ENCODE measurements at regions of chr3 and their contacts with region 1.

Region 1: GRCh38 chr3:44529927-44530326 is 25.1 kb upstream of the ZKSCAN7 start:
- DNase-seq: peak; percentile 41
- ATAC-seq: no peak
- H3K4me3 ChIP-seq: no peak overlapping the region
- H3K27ac ChIP-seq: no peak overlapping the region
- H3K4me1 ChIP-seq: no peaks in the 10 kb centered on the region
- H3K27me3 ChIP-seq: peaks cover 6% of the 10 kb centered on the region; the same call in 1 of the 2 replicates
- CTCF ChIP-seq: peak; percentile 65

Region 2: DNA sequence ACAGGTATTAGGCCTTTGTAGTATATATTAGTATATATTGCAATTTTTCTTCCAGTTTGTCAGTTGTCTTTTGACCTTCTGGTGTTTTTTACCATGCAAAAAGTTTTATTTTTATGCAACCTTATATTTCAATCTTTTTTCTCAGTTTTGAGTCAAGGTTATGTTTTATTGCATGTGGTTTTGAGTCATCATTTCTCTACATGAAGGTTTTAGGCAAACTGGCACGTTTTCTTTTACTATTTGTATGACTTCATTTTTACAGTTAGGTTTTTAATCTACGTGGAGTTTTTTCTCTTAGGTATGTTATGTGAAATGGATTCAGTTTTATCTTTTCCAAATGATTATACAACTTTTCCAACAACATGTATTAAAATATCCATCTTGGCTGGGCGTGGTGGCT is 228.2 kb before region 1 on chr3:
- CTCF ChIA-PET with region 1: no interaction called
- POLR2A ChIA-PET with region 1: interaction called, 13 read pairs
- intact Hi-C with region 1: no loop called
- DNase-seq: peak; percentile 19
- ATAC-seq: no peak
- H3K4me3 ChIP-seq: no peak overlapping the region
- H3K27ac ChIP-seq: no peak overlapping the region
- H3K4me1 ChIP-seq: no peaks in the 10 kb centered on the region
- H3K27me3 ChIP-seq: no peaks in the 10 kb centered on the region
- CTCF ChIP-seq: no peak

Region 3: GRCh38 chr3:44612678-44613077 is 82.8 kb after region 1 on chr3:
- CTCF ChIA-PET with region 1: no interaction called
- POLR2A ChIA-PET with region 1: no interaction called
- intact Hi-C with region 1: no loop called
- DNase-seq: no peak
- ATAC-seq: no peak
- H3K4me3 ChIP-seq: no peak overlapping the region
- H3K27ac ChIP-seq: no peak overlapping the region
- H3K4me1 ChIP-seq: no peaks in the 10 kb centered on the region
- H3K27me3 ChIP-seq: no peaks in the 10 kb centered on the region
- CTCF ChIP-seq: no peak

Region 4: DNA sequence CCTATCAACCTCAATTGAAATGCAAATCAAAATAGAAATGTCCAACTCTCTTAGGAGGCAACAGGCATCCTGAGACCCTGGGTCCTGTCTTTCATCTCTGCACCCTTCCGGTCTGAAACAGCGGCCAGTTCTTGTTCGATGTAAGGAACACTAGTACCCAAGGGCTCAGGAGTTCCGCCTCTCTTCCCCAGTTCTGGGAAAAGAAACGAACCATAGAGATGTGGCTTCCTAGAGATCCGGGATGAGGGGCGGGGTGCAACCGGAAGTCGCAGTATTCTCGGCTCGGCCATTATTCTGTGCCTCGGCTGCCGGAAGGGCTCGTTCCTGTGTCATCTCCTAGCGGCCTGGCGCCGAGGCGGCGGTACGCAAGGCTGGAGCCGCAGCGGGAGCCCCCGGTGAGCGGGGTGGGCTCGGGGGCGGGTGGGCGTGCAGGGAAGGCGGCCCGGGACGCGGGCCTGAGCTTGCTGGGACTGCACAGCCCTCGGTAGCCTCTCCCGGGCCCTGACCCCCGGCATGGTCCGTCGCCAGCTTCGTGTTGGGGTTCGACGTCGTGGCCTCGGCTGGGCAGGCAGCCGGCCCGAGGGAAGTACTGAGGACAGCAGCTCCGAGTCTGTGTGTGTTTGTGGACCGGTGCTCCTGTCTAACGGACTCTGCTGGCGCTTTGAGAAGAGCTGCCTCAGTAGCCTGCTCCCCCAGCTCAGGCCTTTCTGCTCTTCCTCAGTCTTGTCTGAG is 95.0 kb after region 1 on chr3 and contains the start of gene ZNF197:
- CTCF ChIA-PET with region 1: interaction called, 3 read pairs
- POLR2A ChIA-PET with region 1: no interaction called
- intact Hi-C with region 1: loop called (anchors 2 kb)
- DNase-seq: peak; percentile 91
- ATAC-seq: peak; percentile 96
- H3K4me3 ChIP-seq: peak within 1 kb of the TSS; percentile 92
- H3K27ac ChIP-seq: peak within 1 kb of the TSS; percentile 25
- H3K4me1 ChIP-seq: peaks cover 13% of the 10 kb centered on the region
- H3K27me3 ChIP-seq: no peaks in the 10 kb centered on the region
- CTCF ChIP-seq: no peak
- total RNA-seq, gene ZNF197: 9.6 and 10.4 TPM in 2 replicates

Region 5: DNA sequence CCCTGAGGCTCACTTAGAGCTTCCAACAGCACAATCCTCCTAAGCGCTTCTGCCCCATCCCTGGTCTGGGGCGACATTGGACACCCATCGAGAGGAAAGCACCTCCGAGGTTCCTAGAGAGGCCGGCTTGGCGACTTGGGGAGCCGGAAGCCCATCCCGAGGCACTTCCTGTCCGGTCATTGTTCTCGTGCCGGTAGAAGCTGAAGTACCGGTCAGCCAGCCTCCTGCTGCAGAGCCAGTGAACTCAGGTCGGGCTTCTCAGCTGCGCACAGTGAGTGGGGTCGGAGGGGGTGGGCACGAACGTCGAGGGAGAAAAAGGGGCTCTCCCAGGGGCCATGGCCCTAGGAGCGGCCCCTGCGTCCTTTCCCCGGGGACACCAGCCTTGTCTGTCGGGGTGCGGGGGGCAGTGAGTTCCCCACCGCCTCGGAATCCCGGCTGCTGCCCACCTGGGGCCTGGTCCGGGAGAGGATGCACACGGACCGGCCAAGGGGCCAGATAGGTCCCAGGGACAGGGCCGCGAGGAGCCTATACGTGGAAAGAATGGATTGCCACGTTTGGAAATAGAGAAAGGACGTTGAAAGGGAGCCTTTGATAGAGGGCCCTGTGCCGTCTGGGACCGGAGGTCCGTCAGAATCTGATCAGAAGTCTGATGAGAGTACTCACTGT is 118.8 kb after region 1 on chr3 and contains the start of gene ZNF35:
- CTCF ChIA-PET with region 1: no interaction called
- POLR2A ChIA-PET with region 1: no interaction called
- intact Hi-C with region 1: loop called (anchors 2 kb)
- DNase-seq: peak; percentile 92
- ATAC-seq: peak; percentile 98
- H3K4me3 ChIP-seq: peak within 1 kb of the TSS; percentile 74
- H3K27ac ChIP-seq: no peak within 1 kb of the TSS
- H3K4me1 ChIP-seq: peaks cover 3% of the 10 kb centered on the region; the same call in 1 of the 2 replicates
- H3K27me3 ChIP-seq: no peaks in the 10 kb centered on the region
- CTCF ChIP-seq: no peak
- total RNA-seq, gene ZNF35: 12.0 and 12.4 TPM in 2 replicates

Region 6: DNA sequence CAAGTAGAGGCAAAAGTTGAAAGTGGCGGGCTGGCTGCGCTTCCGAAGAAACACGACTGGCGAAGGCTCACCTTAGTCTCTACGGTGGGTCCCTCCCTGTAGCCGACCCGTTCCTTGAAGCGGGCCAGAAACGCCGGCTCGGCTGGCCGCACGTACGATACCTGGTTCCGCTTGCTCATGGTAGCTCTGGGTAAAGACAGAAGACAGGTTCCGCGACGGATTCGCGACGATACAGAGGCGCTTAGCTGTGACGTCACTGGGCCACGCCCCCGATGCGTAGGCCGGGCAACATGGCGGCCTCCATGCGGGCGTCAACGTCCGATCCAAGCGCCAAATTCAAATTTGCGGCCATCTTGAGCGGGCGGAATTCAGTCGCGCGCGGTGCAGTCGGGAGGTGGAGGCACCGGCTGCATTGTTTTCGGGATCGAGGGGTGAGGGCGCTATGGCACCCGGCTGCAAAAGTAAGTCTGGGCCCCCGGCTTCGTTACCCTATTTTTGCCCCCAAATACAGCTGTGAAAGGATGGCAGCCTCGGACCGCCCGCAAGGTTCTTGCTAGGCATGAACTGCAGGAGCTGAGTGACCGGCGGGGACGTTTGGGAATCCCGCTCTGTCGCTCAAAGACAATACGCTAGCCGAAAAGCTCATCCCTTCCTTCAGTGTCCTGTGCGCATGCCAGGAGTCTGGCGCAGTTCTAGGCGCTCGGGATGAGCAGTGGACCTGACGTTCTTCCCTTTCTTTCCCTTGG is 231.7 kb after region 1 on chr3 and contains the starts of genes KIAA1143 and KIF15:
- CTCF ChIA-PET with region 1: no interaction called
- POLR2A ChIA-PET with region 1: no interaction called
- intact Hi-C with region 1: loop called (anchors 2 kb)
- DNase-seq: peak; percentile 98
- ATAC-seq: peak; percentile 90
- H3K4me3 ChIP-seq: peak within 1 kb of the TSS; percentile 76
- H3K27ac ChIP-seq: peak within 1 kb of the TSS; percentile 55
- H3K4me1 ChIP-seq: peaks cover 7% of the 10 kb centered on the region
- H3K27me3 ChIP-seq: no peaks in the 10 kb centered on the region
- CTCF ChIP-seq: peak; percentile 30; the same call in 1 of the 2 replicates
- total RNA-seq, gene KIAA1143: 16.5 and 20.4 TPM in 2 replicates
- total RNA-seq, gene KIF15: 19.1 and 31.8 TPM in 2 replicates

Region 7: GRCh38 chr3:44913868-44914468 is 384.0 kb after region 1 on chr3:
- CTCF ChIA-PET with region 1: interaction called, 4 read pairs
- POLR2A ChIA-PET with region 1: no interaction called
- intact Hi-C with region 1: loop called (anchors 1 kb)
- DNase-seq: peak; percentile 87
- ATAC-seq: peak; percentile 72
- H3K4me3 ChIP-seq: no peak overlapping the region
- H3K27ac ChIP-seq: no peak overlapping the region
- H3K4me1 ChIP-seq: no peaks in the 10 kb centered on the region
- H3K27me3 ChIP-seq: no peaks in the 10 kb centered on the region
- CTCF ChIP-seq: peak; percentile 93

Region 8: DNA sequence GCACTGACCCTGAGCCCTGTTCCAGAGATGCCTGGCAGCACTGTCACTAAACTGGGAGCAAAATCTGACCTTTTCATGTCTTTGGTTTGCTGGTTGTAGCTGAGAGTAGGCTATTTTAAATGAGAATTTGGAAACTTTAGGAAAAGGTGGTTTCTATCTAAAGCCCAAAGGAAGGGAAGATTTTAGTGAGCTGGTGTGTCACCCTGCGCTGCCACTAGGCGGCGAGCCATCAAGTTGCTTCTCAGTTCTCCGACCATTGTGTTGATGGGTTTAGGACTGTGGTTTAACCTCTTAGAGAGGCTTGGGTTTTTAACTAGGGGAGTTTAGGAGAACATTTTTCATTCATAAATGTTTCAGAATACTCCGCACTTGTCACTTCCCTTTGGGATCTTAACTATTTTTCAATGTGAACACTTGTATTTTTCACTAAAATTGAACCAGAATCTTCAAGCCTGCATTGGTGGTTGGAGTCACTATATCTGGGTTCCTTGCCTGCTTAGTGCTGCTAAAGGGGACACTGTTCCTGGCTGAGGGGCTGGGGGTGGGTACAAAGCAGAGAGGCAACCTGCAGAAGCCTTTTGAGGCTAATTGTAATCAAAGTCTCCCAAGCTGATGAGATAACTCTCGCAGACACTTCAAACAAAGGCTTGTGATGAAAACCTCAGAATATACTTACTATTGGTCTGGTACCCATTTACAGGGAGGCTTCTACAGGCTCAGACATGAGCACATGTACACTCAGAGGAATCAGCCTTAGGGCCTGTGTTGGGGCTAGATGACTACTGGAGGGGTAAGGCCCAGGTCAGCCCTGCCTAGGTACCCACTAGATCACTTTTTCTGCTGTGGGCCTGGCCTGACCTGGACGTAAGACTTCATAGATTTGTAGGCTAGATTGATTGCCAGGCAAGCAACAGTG is 462.9 kb after region 1 on chr3:
- CTCF ChIA-PET with region 1: no interaction called
- POLR2A ChIA-PET with region 1: no interaction called
- intact Hi-C with region 1: loop called (anchors 10 kb)
- DNase-seq: peak; percentile 38
- ATAC-seq: no peak
- H3K4me3 ChIP-seq: no peak overlapping the region
- H3K27ac ChIP-seq: peak overlapping the region; percentile 68
- H3K4me1 ChIP-seq: peaks cover 42% of the 10 kb centered on the region
- H3K27me3 ChIP-seq: no peaks in the 10 kb centered on the region
- CTCF ChIP-seq: peak; percentile 89